Aorta (tissue), 5 donors: ENCODE measurements at regions of chr10 and their contacts with region 1.

Region 1: GRCh38 chr10:30413996-30414576 is 19.9 kb upstream of the MAP3K8 start:
- DNase-seq: no peak
- ATAC-seq: peak; percentile 88
- H3K4me3 ChIP-seq: no peak overlapping the region
- H3K27ac ChIP-seq: no peak overlapping the region
- H3K4me1 ChIP-seq: no peaks in the 10 kb centered on the region
- H3K27me3 ChIP-seq: no peaks in the 10 kb centered on the region

Region 2: GRCh38 chr10:30534465-30535144 is 120.5 kb after region 1 on chr10:
- intact Hi-C with region 1: loop called (anchors 1 to 5 kb)
- DNase-seq: peak; percentile 74 to 77
- ATAC-seq: peak; percentile 83
- H3K4me3 ChIP-seq: no peak overlapping the region
- H3K27ac ChIP-seq: no peak overlapping the region
- H3K4me1 ChIP-seq: no peaks in the 10 kb centered on the region
- H3K27me3 ChIP-seq: no peaks in the 10 kb centered on the region

Region 3: GRCh38 chr10:30591249-30591670 is 177.2 kb after region 1 on chr10:
- intact Hi-C with region 1: loop called in 1 of 2 experiments (anchors 5 kb)
- DNase-seq: no peak
- ATAC-seq: peak; percentile 82
- H3K4me3 ChIP-seq: no peak overlapping the region
- H3K27ac ChIP-seq: no peak overlapping the region
- H3K4me1 ChIP-seq: no peaks in the 10 kb centered on the region
- H3K27me3 ChIP-seq: no peaks in the 10 kb centered on the region